ENCODE measurements at regions of chr11 and their contacts with region 1.

Region 1: GRCh38 chr11:46700241-46701077 is at the starts of genes ARHGAP1 and ZNF408:
- DNase-seq: peak; percentile 95
- H3K4me3 ChIP-seq: peak within 1 kb of the TSS; percentile 99
- CTCF ChIP-seq: no peak

Region 2: DNA sequence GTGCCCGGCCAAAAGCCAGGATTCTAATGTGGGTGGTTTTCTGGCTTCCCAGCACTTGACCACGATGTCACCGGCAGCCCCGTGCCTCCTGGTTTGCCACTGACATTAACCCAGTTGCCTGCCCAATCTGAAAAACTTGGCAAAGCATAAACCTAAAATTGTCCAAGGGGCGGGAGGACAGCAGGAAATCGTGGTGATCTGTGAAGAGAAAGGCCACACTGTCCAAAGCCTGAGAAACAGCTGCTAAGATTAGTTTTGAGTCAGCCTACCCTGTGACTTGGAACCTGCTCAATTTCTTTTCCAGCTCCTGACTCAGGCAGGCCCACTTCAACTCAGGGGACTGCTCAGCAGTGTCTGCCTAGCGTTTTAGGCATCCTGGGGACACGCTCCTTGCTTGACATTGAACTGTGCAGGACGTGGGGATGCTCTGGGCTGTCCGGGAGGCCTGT is 10.4 kb after region 1 on chr11:
- CTCF ChIA-PET with region 1: interaction called, 3 read pairs
- POLR2A ChIA-PET with region 1: interaction called, 24 read pairs
- DNase-seq: peak; percentile 90
- H3K4me3 ChIP-seq: no peak overlapping the region
- CTCF ChIP-seq: no peak